MCF 10A (cell line): ENCODE measurements at regions of chr5 and their contacts with region 1.

Region 1: DNA sequence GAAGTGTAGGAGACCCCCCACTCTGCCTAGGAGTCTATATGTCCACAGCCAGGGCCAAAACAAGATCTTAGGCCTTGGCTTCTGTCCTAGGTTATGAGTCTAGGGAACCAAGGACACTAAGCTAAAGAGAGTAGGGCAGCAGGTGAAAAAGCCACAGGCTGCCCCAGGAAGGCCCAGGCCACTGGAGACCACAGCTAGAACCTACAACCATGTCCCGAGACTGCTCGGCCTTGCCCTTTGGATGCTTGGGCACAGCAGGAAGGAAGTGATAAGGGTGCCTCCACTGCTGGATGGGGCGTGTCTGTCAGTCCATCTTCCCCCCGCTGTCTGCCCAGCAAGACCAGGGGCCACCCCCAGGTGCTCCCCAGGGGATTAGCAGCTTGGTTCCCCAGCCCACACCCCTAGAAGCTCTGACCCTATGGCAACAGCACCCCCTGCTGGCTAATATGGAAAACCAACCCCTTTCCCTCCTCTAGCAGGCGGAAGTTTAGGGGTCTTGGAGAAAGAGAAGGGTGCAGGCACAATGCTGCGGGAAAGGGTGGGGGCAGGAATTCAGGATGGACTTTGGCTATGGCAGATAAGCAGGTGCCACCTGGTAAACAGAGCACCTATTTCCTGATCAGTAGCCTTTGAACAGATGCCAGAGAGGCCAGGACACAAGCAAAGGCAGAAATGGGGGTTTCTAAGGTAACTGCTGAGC is 10.5 kb upstream of the IRF1 start:
- DNase-seq: peak; percentile 91
- H3K4me3 Mint-ChIP-seq: no peak overlapping the region
- H3K27ac Mint-ChIP-seq: peak overlapping the region; percentile 83
- H3K4me1 Mint-ChIP-seq: peaks cover 35% of the 10 kb centered on the region
- H3K27me3 Mint-ChIP-seq: no peaks in the 10 kb centered on the region
- CTCF ChIP-seq: peak; percentile 99

Region 2: DNA sequence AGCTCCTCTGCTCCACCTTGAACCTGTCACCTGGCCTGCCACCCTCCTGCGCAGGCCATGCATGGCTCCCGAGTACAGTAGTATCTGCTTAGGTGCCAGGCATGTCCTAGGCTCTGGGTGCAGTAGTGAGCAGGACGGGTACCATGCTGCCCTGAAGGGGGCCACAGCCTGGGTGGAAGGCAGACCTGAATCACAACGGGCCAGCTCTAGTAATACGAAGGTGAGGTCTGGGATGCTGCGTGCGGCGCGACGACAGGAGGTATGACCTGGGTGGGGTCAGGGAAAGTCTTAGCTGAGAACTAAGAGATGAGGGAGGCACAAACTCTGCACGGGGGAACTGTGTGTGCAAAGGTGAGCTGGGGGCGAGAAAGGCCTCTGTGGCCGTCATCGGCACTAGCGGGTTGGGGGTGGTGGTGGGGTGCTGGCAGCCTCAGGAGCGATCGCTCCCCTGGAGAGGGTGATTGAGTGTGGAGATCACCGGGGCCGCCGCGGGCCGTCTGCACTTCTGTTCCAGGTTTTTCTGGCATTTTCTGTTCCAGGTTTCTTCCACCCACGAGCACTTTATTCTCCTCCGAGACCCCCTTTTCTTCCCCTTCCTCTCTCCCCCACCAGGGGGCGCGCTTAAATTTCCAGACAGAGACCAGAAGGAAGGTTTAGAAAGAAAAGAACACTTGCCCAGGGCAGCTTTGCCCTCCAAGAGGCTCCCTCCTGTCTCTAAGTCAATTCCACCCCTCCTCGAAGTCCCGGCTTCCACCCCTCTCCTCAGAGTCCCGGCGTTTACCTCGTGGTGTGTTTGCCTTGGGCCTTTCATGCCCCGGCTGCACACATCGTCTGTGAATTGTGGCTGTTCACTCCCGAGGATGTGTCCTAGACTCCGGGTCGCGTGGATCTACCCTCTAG is 228.5 kb before region 1 on chr5:
- CTCF ChIA-PET with region 1: interaction called, 26 read pairs
- POLR2A ChIA-PET with region 1: interaction called, 4 read pairs
- intact Hi-C with region 1: no loop called
- DNase-seq: peak; percentile 68
- H3K4me3 Mint-ChIP-seq: no peak overlapping the region
- H3K27ac Mint-ChIP-seq: no peak overlapping the region
- H3K4me1 Mint-ChIP-seq: peaks cover 2% of the 10 kb centered on the region
- H3K27me3 Mint-ChIP-seq: no peaks in the 10 kb centered on the region
- CTCF ChIP-seq: peak; percentile 96

Region 3: DNA sequence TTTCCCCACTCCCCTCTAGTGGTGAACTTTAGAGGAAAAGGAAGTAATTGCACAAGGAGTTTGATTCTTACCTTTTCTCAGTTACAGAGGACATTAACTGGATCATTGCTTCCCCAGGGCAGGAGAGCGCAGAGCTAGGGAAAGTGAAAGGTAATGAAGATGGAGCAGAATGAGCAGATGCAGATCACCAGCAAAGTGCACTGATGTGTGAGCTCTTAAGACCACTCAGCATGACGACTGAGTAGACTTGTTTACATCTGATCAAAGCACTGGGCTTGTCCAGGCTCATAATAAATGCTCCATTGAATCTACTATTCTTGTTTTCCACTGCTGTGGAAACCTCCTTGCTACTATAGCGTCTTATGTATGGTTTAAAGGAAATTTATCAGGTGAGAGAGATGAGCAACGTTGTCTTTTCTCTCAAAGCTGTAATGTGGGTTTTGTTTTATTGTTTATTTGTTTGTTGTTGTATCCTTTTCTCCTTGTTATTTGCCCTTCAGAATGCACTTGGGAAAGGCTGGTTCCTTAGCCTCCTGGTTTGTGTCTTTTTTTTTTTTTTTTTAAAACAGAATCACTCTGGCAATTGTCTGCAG is 106.3 kb before region 1 on chr5:
- CTCF ChIA-PET with region 1: interaction called, 359 read pairs
- POLR2A ChIA-PET with region 1: interaction called, 84 read pairs
- intact Hi-C with region 1: no loop called
- DNase-seq: no peak
- H3K4me3 Mint-ChIP-seq: no peak overlapping the region
- H3K27ac Mint-ChIP-seq: peak overlapping the region; percentile 33
- H3K4me1 Mint-ChIP-seq: peaks cover 16% of the 10 kb centered on the region
- H3K27me3 Mint-ChIP-seq: no peaks in the 10 kb centered on the region
- CTCF ChIP-seq: no peak

Region 4: DNA sequence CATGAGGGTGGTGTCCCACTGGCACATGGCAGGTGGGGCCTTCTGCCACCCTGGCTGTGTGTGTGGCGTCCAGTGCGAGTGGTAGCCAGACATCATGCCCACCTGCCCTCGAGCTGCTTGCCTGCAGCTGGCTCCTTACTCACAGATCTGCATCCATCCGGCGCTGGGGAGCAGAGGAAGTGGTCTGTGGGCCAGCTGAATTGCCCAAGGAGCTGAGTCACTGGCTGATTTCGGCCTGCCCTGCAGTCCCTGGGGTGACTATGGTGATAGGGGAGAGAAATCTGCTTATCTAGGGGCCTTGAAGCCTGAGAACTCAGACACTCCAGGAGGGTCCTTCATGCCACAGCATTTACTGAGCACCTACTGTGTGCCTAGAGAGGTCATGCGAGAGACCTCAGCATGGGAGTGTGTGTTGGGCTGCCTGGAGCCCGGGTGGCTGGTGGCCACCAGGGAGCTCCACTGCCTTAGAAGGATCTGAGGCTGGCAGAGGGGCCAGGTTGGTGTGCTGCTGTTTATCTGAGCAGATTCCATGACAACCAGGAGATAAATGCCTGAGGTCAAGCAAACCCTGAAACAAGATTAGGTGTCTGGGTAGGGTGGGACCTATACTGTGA is 74.4 kb before region 1 on chr5:
- CTCF ChIA-PET with region 1: interaction called, 18 read pairs
- POLR2A ChIA-PET with region 1: interaction called, 52 read pairs
- intact Hi-C with region 1: no loop called
- DNase-seq: peak; percentile 96
- H3K4me3 Mint-ChIP-seq: no peak overlapping the region
- H3K27ac Mint-ChIP-seq: peak overlapping the region; percentile 68
- H3K4me1 Mint-ChIP-seq: peaks cover 47% of the 10 kb centered on the region
- H3K27me3 Mint-ChIP-seq: no peaks in the 10 kb centered on the region
- CTCF ChIP-seq: peak; percentile 22

Region 5: GRCh38 chr5:132479111-132479951 is 21.8 kb before region 1 on chr5:
- CTCF ChIA-PET with region 1: interaction called, 14 read pairs
- POLR2A ChIA-PET with region 1: interaction called, 21 read pairs
- intact Hi-C with region 1: no loop called
- DNase-seq: no peak
- H3K4me3 Mint-ChIP-seq: no peak overlapping the region
- H3K27ac Mint-ChIP-seq: no peak overlapping the region
- H3K4me1 Mint-ChIP-seq: no peaks in the 10 kb centered on the region
- H3K27me3 Mint-ChIP-seq: no peaks in the 10 kb centered on the region
- CTCF ChIP-seq: no peak

Region 6: GRCh38 chr5:132947671-132948070 is 446.6 kb after region 1 on chr5:
- CTCF ChIA-PET with region 1: no interaction called
- POLR2A ChIA-PET with region 1: no interaction called
- intact Hi-C with region 1: no loop called
- DNase-seq: peak; percentile 6
- H3K4me3 Mint-ChIP-seq: no peak overlapping the region
- H3K27ac Mint-ChIP-seq: no peak overlapping the region
- H3K4me1 Mint-ChIP-seq: peaks cover 33% of the 10 kb centered on the region
- H3K27me3 Mint-ChIP-seq: no peaks in the 10 kb centered on the region
- CTCF ChIP-seq: no peak